ENCODE measurements at regions of chr14 and their contacts with region 1.

Region 1: DNA sequence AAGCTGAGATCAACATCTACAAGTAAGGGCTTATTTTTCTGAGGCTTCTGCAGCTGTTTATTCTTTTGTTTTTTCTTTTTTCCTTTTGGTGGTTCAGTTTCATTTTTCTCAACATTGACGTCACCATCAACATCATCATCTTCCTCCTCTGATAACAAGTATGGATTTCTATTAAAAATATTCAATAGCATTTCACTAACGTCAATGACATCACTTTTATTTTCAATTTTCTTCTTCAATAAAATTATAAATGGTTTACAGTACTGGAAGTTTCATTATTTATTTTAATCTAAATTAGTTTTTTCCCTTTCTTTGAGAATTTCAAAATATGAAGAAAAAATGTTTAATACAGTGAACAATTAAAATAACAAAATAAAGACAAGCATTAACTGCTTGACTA is 23.9 kb downstream of the NEMF start:
- DNase-seq: no peak
- ATAC-seq: no peak

Region 2: DNA sequence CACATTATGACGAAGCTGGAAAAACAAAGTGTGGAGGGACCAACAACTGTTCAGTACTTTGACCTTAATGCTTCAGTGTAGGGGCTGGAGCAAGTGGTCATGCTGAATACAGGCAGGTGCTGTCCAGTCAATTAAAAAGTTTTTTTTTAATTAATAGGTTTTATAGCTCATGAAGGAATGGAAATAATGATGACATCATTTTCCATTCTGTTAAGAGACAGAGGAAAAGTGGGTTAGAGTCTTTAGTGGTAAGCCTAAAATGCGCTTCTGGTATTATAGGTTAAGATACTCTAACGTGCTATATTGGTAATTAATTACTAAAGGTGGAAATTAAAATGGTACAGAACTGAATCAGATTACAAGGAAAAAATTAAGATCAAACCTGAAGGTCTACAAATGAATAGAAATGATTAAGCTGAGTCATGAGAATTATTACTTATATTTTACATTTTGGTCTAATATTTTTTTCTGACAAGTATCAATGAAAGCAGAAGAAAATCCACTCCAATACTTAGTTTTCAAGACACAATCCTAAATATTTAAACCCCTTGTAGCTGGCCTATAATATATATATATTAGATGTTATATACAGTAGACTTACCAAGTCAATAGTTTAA is 45.1 kb before region 1 on chr14:
- intact Hi-C with region 1: loop called (anchors 5 kb)
- DNase-seq: no peak
- ATAC-seq: no peak

Measured in Right ventricle myocardium inferior (tissue), 1 donor.